ENCODE measurements at regions of chrX and their contacts with region 1.

Region 1: GRCh38 chrX:103686199-103687072 is at the start of gene MORF4L2:
- DNase-seq: peak; percentile 99
- ATAC-seq: peak; percentile 86
- H3K4me3 ChIP-seq: peak within 1 kb of the TSS; percentile 89
- H3K27ac ChIP-seq: peak within 1 kb of the TSS; percentile 100
- H3K4me1 ChIP-seq: no peaks in the 10 kb centered on the region
- H3K27me3 ChIP-seq: no peaks in the 10 kb centered on the region
- CTCF ChIP-seq: no peak
- POLR2A ChIP-seq: peak; percentile 98
- RAD21 ChIP-seq: no peak
- total RNA-seq, gene MORF4L2: 1,218 and 1,398 TPM in 2 replicates

Region 2: GRCh38 chrX:103248553-103248952 is 437.9 kb before region 1 on chrX:
- CTCF ChIA-PET with region 1: no interaction called
- POLR2A ChIA-PET with region 1: no interaction called
- dilution Hi-C with region 1: no loop called
- in situ Hi-C with region 1: no loop called
- intact Hi-C with region 1: no loop called
- DNase-seq: peak; percentile 10
- ATAC-seq: peak; percentile 67
- H3K4me3 ChIP-seq: no peak overlapping the region
- H3K27ac ChIP-seq: no peak overlapping the region
- H3K4me1 ChIP-seq: no peaks in the 10 kb centered on the region
- H3K27me3 ChIP-seq: peaks cover 2% of the 10 kb centered on the region; the same call in 1 of the 2 replicates
- CTCF ChIP-seq: peak; percentile 40; the same call in 1 of the 2 replicates
- POLR2A ChIP-seq: no peak
- RAD21 ChIP-seq: peak; percentile 25; the same call in 1 of the 2 replicates

Region 3: DNA sequence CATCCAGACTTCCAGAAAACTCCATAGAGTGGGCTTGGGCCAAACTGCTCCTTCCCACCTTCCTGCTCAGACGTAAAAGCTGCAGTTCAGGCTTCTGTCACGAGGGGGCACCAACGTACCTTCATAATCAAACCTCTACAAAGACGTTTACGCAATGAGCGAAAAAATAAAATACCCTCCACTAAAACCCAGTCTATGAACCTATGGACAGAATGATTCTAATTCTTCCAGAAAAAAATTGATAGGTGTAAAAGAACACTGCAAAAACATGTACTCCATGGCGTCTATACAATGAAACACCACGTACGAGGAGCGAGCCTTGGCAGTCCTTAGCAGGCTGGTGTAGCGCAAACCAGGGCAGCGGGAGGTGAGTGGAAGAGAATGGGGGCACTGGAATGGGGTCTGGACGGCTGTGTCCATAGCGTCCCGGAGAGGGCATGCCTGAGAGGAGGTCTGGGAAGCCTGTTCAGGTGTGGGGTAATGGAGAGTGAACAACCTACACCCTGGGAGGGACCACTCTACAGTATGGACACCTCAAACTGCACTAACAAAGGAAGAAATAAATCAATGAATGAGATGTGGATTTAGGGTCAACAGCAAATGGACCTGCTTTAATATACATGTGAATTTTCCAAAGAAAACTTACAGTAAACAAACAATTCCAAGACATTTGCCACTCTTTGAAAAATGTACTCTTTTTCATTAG is 152.8 kb before region 1 on chrX:
- CTCF ChIA-PET with region 1: no interaction called
- POLR2A ChIA-PET with region 1: no interaction called
- dilution Hi-C with region 1: no loop called
- in situ Hi-C with region 1: no loop called
- intact Hi-C with region 1: loop called (anchors 1 kb)
- DNase-seq: peak; percentile 65
- ATAC-seq: peak; percentile 67
- H3K4me3 ChIP-seq: no peak overlapping the region
- H3K27ac ChIP-seq: no peak overlapping the region
- H3K4me1 ChIP-seq: peaks cover 5% of the 10 kb centered on the region; the same call in 1 of the 2 replicates
- H3K27me3 ChIP-seq: peaks cover 2% of the 10 kb centered on the region; the same call in 1 of the 2 replicates
- CTCF ChIP-seq: peak; percentile 73
- POLR2A ChIP-seq: no peak
- RAD21 ChIP-seq: peak; percentile 79

Region 4: DNA sequence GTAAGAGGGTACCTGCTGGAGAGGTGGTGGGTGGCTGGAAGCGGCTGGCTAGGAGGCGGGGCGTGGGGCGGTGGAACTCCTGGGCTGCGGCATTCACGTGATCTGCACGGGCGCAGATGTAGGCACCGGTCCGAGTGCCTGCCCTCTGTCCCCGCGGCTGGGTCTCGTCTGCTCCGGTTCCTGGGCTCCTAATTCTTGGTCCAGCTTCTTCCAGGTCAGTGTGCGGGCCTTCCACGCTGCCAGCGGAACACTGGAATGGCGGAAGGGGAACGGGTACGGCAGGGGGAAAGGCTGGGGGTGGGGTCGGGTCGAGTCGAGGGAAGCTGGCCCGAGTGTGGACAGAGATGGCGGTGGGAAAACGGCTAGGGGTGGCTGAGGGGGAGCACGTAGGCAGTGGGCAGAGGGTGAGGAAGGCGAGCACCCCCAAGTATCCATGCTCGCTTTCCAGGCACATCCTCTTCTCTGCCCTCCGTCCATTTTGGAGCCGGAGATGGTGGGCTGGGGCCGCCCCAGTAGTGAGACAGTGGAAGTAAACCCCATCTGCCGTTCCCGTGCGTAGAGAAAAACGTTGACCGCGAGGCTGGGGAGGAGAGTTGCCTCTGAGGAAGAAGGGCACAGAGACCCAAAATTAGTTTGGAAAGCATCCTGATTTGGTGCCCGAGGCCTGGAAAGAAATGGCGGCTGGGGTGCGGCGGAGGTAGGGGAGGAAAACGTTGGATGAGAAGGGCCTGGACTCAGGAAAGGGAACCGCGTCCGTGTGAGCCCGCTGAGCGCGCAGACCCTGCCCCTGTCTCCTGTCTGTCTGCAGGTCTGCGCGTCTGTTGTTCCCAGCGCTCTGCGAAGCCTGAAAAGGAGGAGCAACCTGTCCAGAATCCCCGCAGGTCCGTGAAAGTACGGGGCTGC is 100.8 kb before region 1 on chrX and contains the start of gene TCEAL4:
- CTCF ChIA-PET with region 1: no interaction called
- POLR2A ChIA-PET with region 1: no interaction called
- dilution Hi-C with region 1: no loop called
- in situ Hi-C with region 1: no loop called
- intact Hi-C with region 1: loop called (anchors 5 kb)
- DNase-seq: no peak
- ATAC-seq: peak; percentile 89
- H3K4me3 ChIP-seq: peak within 1 kb of the TSS; percentile 100
- H3K27ac ChIP-seq: peak within 1 kb of the TSS; percentile 96
- H3K4me1 ChIP-seq: no peaks in the 10 kb centered on the region; the same call in 1 of the 2 replicates
- H3K27me3 ChIP-seq: no peaks in the 10 kb centered on the region
- CTCF ChIP-seq: no peak
- POLR2A ChIP-seq: no peak
- RAD21 ChIP-seq: no peak
- total RNA-seq, gene TCEAL4: 11.1 and 16.7 TPM in 2 replicates

Region 5: DNA sequence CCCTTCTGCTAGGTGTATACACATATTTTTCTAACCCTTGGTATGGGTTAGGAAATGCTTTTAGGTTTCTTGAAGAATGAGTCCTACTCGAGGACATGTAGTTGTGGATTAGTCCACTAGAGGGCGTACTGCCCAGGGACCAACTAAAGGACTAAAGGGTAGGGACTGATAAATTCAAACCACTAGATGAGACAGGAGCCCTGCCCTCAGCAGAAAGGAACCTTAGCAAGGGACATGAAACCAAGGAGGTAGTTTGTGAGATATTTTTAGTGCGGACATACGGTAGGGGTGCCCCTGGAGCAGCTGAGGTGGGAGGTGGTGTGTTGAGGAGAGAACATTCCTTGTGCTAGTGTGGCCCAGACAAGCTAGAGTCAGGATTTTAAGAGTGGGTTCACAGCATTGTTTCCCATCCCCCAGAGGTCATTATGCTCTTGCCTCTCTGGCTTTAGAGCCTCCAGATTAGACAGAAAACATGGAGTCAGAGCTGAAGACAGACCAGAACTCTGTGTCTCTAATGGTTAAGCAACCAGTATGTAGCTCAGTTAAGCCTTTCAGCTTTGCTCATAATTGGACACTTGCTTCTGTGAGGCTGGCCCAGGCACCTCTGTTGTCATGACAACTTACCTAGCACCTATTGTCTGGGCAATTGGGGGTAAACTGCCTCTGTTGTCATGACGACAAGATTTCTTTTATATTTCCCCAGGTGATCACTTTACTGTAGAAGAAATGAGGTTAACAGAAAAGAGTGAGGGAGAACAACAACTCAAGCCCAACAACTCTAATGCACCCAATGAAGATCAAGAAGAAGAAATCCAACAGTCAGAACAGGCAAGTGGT is 25.3 kb after region 1 on chrX:
- CTCF ChIA-PET with region 1: no interaction called
- POLR2A ChIA-PET with region 1: interaction called, 13 read pairs
- dilution Hi-C with region 1: no loop called
- in situ Hi-C with region 1: no loop called
- intact Hi-C with region 1: no loop called
- DNase-seq: peak; percentile 58
- ATAC-seq: peak; percentile 62
- H3K4me3 ChIP-seq: no peak overlapping the region
- H3K27ac ChIP-seq: no peak overlapping the region
- H3K4me1 ChIP-seq: peaks cover 6% of the 10 kb centered on the region
- H3K27me3 ChIP-seq: peaks cover 3% of the 10 kb centered on the region; the same call in 1 of the 2 replicates
- CTCF ChIP-seq: peak; percentile 52
- POLR2A ChIP-seq: no peak
- RAD21 ChIP-seq: peak; percentile 44

Region 6: GRCh38 chrX:103742339-103742738 is 55.9 kb after region 1 on chrX:
- CTCF ChIA-PET with region 1: no interaction called
- POLR2A ChIA-PET with region 1: no interaction called
- dilution Hi-C with region 1: no loop called
- in situ Hi-C with region 1: no loop called
- intact Hi-C with region 1: no loop called
- DNase-seq: no peak
- ATAC-seq: no peak
- H3K4me3 ChIP-seq: no peak overlapping the region
- H3K27ac ChIP-seq: no peak overlapping the region
- H3K4me1 ChIP-seq: no peaks in the 10 kb centered on the region
- H3K27me3 ChIP-seq: peaks cover 12% of the 10 kb centered on the region
- CTCF ChIP-seq: no peak
- POLR2A ChIP-seq: no peak
- RAD21 ChIP-seq: no peak

Region 7: DNA sequence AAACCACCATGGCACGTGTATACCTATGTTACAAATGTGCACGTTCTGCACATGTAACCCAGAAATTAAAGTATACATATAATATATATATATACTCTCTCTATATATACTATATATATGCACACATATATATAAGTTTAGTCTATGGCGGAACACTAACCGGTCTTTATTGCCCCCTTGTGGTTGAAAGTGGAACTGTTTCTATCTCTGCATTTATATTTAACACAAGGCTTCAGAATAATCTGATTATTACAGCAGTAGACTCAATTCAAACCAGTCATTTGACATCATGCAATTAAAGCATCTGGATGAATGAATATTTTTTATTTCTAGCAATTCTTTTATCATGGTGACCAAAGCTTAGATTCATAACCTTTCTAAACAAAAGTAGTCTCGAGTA is 131.1 kb after region 1 on chrX:
- CTCF ChIA-PET with region 1: no interaction called
- POLR2A ChIA-PET with region 1: no interaction called
- dilution Hi-C with region 1: no loop called
- in situ Hi-C with region 1: no loop called
- intact Hi-C with region 1: loop called (anchors 1 kb)
- DNase-seq: peak; percentile 42
- ATAC-seq: peak; percentile 79
- H3K4me3 ChIP-seq: no peak overlapping the region
- H3K27ac ChIP-seq: no peak overlapping the region
- H3K4me1 ChIP-seq: no peaks in the 10 kb centered on the region
- H3K27me3 ChIP-seq: peaks cover 1% of the 10 kb centered on the region; the same call in 1 of the 2 replicates
- CTCF ChIP-seq: peak; percentile 62
- POLR2A ChIP-seq: no peak
- RAD21 ChIP-seq: peak; percentile 61

Region 8: GRCh38 chrX:104113222-104113965 is 427.0 kb after region 1 on chrX:
- CTCF ChIA-PET with region 1: no interaction called
- POLR2A ChIA-PET with region 1: no interaction called
- dilution Hi-C with region 1: no loop called
- in situ Hi-C with region 1: no loop called
- intact Hi-C with region 1: loop called (anchors 5 kb)
- DNase-seq: peak; percentile 53
- ATAC-seq: peak; percentile 56
- H3K4me3 ChIP-seq: peak overlapping the region; percentile 96
- H3K27ac ChIP-seq: no peak overlapping the region
- H3K4me1 ChIP-seq: no peaks in the 10 kb centered on the region
- H3K27me3 ChIP-seq: peaks cover 2% of the 10 kb centered on the region; the same call in 1 of the 2 replicates
- CTCF ChIP-seq: peak; percentile 47
- POLR2A ChIP-seq: no peak
- RAD21 ChIP-seq: peak; percentile 33; the same call in 1 of the 2 replicates

Measured in IMR-90 (cell line).